Activated CD4-positive, alpha-beta memory T cell treated with anti-CD3 and anti-CD28 coated beads, Interleukin-2, amount 10 ng/mL, durations not matched to agents 7 days and 5 days (primary cell): ENCODE measurements at regions of chr3 and their contacts with region 1.

Region 1: DNA sequence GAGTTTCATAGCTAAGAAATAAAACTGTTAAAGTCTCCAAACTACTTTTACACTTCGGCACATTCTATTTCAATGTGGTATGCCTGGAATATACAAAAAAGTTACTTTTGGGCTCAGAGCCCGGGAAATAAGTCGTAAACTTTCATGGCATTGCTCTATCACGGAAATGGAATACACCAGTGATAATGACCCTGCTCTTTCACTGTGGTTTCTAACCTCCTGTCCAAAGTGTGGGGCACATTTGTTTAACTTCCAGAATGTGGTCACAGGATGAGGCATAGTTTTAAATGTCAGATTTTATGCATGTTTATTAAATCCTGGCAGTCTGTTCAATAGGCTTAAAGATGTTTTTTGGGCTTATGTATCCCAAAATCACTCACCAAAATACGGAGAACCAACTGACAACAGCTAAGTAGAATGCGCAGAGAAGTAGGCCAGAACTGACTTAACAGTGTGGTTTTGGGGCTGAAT is 5.1 kb downstream of the CXCR6 start:
- DNase-seq: no peak
- H3K4me3 Mint-ChIP-seq: peak overlapping the region; percentile 58
- H3K27ac Mint-ChIP-seq: peak overlapping the region; percentile 90
- H3K4me1 Mint-ChIP-seq: peaks cover 92% of the 10 kb centered on the region
- H3K27me3 Mint-ChIP-seq: no peaks in the 10 kb centered on the region

Region 2: GRCh38 chr3:45958321-45958791 is 10.0 kb after region 1 on chr3:
- CTCF ChIA-PET with region 1: interaction called, 5 read pairs
- POLR2A ChIA-PET with region 1: interaction called, 71 read pairs
- DNase-seq: no peak
- H3K4me3 Mint-ChIP-seq: no peak overlapping the region
- H3K27ac Mint-ChIP-seq: no peak overlapping the region
- H3K4me1 Mint-ChIP-seq: peaks cover 47% of the 10 kb centered on the region
- H3K27me3 Mint-ChIP-seq: no peaks in the 10 kb centered on the region

Region 3: GRCh38 chr3:45964139-45964538 is 15.8 kb after region 1 on chr3:
- CTCF ChIA-PET with region 1: interaction called, 11 read pairs
- POLR2A ChIA-PET with region 1: interaction called, 71 read pairs
- DNase-seq: peak; percentile 62
- H3K4me3 Mint-ChIP-seq: no peak overlapping the region
- H3K27ac Mint-ChIP-seq: peak overlapping the region; percentile 83
- H3K4me1 Mint-ChIP-seq: peaks cover 80% of the 10 kb centered on the region
- H3K27me3 Mint-ChIP-seq: no peaks in the 10 kb centered on the region

Region 4: DNA sequence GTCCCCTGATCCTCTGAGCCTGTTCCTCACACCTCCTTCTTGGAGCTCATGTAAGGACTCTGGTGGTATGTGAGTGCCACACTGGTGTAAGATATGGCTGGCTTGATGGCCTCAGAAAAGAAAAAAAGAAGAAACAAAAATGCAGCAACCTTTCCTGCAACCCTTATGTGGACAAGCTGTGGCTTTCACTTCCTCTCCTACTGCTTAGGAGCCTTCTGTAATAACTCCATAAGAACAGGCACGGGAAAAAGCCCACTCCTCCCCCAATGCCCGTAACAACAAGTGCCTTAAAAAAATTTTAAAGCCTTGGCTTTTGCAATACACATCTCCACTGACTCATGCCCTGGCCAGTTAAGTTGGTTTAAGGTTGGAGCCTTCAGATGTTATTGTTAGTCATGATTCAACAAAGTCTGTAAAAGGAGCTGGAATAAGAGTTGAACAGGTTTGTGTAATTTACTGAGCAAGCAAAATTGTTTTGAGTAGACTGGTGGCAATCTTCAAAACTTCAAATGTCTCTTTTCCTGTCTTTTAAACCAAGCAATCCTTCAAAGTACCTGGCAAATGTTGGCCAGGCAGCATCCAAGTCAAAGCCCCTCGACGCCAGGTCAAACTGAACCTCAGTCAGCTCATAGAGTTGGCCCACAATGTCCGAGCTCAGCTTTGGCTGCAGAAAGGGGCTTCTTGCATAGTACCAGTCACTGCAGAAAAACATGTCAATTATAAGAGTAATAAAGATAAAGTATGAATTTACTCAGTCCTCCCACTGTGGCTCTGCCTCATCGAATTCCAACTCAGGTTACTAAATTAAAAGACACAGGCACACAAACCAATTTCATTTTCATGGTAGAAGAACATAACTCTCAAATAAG is 24.4 kb after region 1 on chr3:
- CTCF ChIA-PET with region 1: interaction called, 3 read pairs
- POLR2A ChIA-PET with region 1: interaction called, 45 read pairs
- DNase-seq: no peak
- H3K4me3 Mint-ChIP-seq: no peak overlapping the region
- H3K27ac Mint-ChIP-seq: peak overlapping the region; percentile 72
- H3K4me1 Mint-ChIP-seq: peaks cover 83% of the 10 kb centered on the region
- H3K27me3 Mint-ChIP-seq: no peaks in the 10 kb centered on the region

Region 5: GRCh38 chr3:45978006-45978761 is 29.8 kb after region 1 on chr3:
- CTCF ChIA-PET with region 1: interaction called, 3 read pairs
- POLR2A ChIA-PET with region 1: interaction called, 45 read pairs
- DNase-seq: peak; percentile 83
- H3K4me3 Mint-ChIP-seq: peak overlapping the region; percentile 50
- H3K27ac Mint-ChIP-seq: peak overlapping the region; percentile 97
- H3K4me1 Mint-ChIP-seq: peaks cover 84% of the 10 kb centered on the region
- H3K27me3 Mint-ChIP-seq: no peaks in the 10 kb centered on the region